ENCODE measurements at regions of chr1 and their contacts with region 1.

Region 1: DNA sequence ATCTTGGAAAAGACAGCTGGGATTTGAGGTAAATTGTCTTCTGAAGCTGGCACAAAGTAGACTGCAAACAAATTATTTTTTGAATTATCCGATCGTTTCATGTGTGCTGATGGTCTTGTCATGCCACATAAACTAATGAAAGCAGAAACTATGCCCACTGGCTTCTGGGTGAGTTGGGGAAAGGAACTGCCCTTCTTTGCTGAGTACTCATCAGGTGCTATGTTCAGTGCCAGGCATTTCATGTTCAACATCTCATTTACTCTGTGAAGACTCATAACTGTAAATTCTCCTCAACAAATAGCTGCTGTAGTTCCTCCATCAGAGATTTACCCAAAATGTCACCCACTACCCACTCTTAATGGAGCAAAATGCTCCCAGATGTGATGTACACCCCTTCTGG is 1.2 kb downstream of the TRIT1 start:
- DNase-seq: no peak
- H3K4me3 Mint-ChIP-seq: peak overlapping the region; percentile 96
- H3K27ac Mint-ChIP-seq: no peak overlapping the region
- H3K4me1 Mint-ChIP-seq: peaks cover 23% of the 10 kb centered on the region
- H3K27me3 Mint-ChIP-seq: no peaks in the 10 kb centered on the region

Region 2: GRCh38 chr1:39845275-39846116 is 36.7 kb before region 1 on chr1:
- intact Hi-C with region 1: loop called (anchors 5 kb)
- DNase-seq: peak; percentile 90
- H3K4me3 Mint-ChIP-seq: peak overlapping the region; percentile 56
- H3K27ac Mint-ChIP-seq: peak overlapping the region; percentile 67
- H3K4me1 Mint-ChIP-seq: peaks cover 35% of the 10 kb centered on the region
- H3K27me3 Mint-ChIP-seq: no peaks in the 10 kb centered on the region